Adrenal gland (tissue), 19 donors: ENCODE measurements at regions of chr1 and their contacts with region 1.

Region 1: DNA sequence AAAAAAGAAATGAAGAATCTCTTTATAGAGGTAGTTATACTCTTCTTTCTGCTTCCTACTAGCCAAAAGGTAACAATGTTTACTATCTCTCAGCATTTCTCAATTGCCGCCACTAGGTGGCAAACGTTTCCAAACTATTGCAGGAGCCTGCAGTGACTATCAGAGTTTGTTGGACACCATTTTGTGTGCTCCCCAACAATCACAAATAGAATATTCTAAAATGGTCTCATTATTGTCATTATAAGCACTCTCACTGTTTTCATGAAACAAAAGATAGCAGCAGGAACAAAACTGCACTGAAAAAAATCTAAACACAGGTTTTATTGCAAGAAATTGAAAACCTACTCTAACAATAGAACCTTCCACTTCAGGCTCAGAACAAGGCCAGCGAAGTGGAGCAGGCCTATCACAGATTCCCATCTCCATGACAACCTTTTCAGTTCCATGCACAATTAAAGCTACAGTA is 83.9 kb upstream of the PLPPR4 start:
- DNase-seq: peak; percentile 79 to 95 (median 83)
- H3K4me3 ChIP-seq: no peak overlapping the region
- H3K27ac ChIP-seq: peak overlapping the region in 1 of 5 donors; percentile 39
- H3K4me1 ChIP-seq: peaks cover 0 to 8% of the 10 kb centered on the region in 2 donors
- H3K27me3 ChIP-seq: no peaks in the 10 kb centered on the region
- CTCF ChIP-seq: peak; percentile 81 to 92 (median 85)
- POLR2A ChIP-seq: no peak

Region 2: GRCh38 chr1:99481391-99481996 is 301.1 kb after region 1 on chr1:
- intact Hi-C with region 1: loop called in 1 of 2 experiments (anchors 5 kb)
- DNase-seq: peak; percentile 36 to 76 (median 59)
- H3K4me3 ChIP-seq: no peak overlapping the region
- H3K27ac ChIP-seq: no peak overlapping the region
- H3K4me1 ChIP-seq: no peaks in the 10 kb centered on the region
- H3K27me3 ChIP-seq: no peaks in the 10 kb centered on the region
- CTCF ChIP-seq: peak; percentile 60 to 84 (median 70)
- POLR2A ChIP-seq: no peak

Region 3: GRCh38 chr1:99685516-99686180 is 505.3 kb after region 1 on chr1:
- intact Hi-C with region 1: loop called in 1 of 2 experiments (anchors 10 kb)
- DNase-seq: peak; percentile 83 to 96 (median 91)
- H3K4me3 ChIP-seq: no peak overlapping the region
- H3K27ac ChIP-seq: peak overlapping the region in 4 of 5 donors; percentile 13 to 57 (median 48)
- H3K4me1 ChIP-seq: peaks cover 7 to 17% of the 10 kb centered on the region in 2 donors
- H3K27me3 ChIP-seq: no peaks in the 10 kb centered on the region
- CTCF ChIP-seq: peak; percentile 42 to 67 (median 59)
- POLR2A ChIP-seq: no peak